ENCODE measurements at regions of chr6 and their contacts with region 1.

Region 1: DNA sequence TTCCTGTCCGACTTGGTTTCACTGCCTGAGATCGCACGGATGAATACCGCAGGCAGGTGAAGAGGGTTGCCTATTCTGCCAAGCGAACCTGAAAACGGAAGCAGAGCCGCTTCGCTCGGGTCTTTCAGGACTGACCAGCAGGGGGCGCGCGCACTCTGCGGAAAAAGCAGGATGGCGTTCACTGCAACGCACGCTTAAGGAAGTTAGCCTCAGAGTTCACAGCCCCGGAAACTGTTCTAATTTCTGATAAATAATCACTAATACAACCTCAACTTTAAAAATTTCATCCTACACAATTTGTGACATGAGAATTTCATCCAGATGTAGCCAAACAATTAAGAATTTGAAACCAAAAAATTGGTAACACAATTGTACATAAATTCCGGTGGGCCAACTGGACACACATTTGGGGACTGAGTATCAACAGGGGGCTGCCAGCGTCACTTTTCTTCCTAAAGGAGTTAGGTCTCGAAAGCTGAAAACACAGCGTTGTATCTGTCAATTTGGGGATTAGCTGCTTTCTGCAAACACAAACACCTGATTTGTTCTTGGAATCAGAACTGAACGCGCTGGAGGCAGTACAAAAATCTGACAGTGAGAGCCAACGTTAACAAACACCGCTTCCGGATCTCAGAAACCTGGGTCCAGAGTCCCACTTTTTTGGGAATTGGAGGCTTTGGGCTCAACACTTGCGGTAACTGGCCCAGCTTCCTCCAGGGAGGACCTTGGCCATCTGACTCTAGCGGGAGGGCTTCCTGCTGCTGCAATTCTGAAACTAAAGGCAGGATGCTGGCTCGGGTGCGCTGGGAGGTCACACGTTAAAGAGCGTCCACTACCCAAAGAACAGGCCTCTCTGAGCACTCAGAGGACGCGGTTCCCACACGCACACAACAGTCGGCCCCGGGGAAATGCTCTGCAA is 8.8 kb downstream of the PXDC1 start:
- DNase-seq: peak; percentile 83 to 93 (median 87)
- ATAC-seq: peak; percentile 60 to 85 (median 77)
- H3K4me3 ChIP-seq: peak overlapping the region in 9 of 12 donors; percentile 11 to 36 (median 25)
- H3K27ac ChIP-seq: peak overlapping the region; percentile 40 to 88 (median 80)
- H3K4me1 ChIP-seq: peaks cover 6 to 98% (median 80%) of the 10 kb centered on the region in 12 donors
- H3K27me3 ChIP-seq: no peaks in the 10 kb centered on the region
- CTCF ChIP-seq: peak; percentile 90 to 98 (median 95)
- POLR2A ChIP-seq: no peak

Region 2: DNA sequence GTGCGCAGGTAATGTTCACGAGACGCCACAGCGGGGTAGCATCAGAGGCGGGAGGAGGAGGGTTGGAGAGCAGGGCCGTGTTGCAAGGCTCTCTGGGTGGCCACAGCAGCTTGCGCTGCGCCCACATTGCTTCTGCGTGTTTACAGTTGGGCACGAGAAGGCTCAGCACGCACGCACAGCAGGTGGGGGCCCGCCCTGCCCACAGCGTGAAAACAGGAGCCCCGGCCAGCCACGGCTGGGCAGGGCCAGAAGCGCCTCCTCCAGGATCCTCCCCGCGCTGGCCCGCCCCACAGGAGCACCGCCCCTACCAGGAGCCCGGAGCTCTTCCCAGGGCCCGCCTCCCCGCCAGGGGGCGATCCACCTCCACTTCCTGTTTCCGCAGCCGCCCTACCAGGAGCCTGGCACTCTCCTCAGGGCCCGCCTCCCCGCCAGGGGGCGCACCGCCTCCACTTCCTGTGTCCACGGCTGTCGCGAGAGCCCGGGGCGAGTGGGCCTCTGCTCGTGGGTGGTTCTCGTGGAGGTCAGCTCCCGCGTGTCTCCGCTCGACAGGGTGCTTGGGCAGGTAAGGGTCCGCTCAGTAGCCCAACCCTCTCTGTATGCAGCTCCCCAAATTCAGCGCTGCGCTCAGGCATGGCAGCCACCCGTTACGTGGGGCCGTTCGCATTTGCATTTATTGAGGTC is 106.4 kb after region 1 on chr6 and contains the start of gene FAM50B:
- intact Hi-C with region 1: loop called in 3 of 10 experiments (anchors 2 to 5 kb)
- DNase-seq: peak; percentile 93 to 96 (median 94)
- ATAC-seq: peak; percentile 95 to 98 (median 98)
- H3K4me3 ChIP-seq: peak within 1 kb of the TSS; percentile 19 to 69 (median 53)
- H3K27ac ChIP-seq: peak within 1 kb of the TSS in 11 of 12 donors; percentile 53 to 83 (median 72)
- H3K4me1 ChIP-seq: peaks cover 0 to 20% (median 2%) of the 10 kb centered on the region in 12 donors
- H3K27me3 ChIP-seq: no peaks in the 10 kb centered on the region
- CTCF ChIP-seq: peak; percentile 91 to 99 (median 94)
- POLR2A ChIP-seq: no peak
- total RNA-seq, gene FAM50B: 13.6 to 29.1 (median 21.5) TPM

Region 3: DNA sequence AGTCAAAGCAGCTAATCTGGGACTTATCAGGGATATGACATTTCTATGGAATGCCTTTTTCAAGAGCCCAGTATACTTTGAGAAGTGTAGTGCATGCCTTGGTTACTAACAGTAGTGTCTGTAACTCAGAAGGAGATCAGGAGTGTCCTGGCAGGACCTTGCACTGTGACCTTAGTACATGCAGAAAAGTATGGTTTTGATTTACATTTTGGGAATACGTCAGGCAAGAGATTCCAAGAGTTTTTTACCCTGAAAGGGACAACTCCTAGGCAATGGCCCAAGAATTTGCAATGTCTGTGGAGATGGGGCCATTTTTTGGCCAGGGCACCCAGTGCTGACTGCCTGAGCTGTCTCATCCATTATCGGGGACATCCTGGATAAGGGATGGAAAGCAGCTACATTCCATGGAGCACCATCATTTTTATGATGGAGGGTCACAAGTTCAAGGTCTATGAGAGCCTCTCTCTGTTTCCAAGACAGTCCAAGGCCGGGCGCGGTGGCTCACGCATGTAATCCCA is 186.7 kb after region 1 on chr6:
- intact Hi-C with region 1: loop called in 8 of 10 experiments (anchors 1 to 5 kb)
- DNase-seq: peak in 1 of 5 donors; percentile 46
- ATAC-seq: peak in 1 of 4 donors; percentile 36
- H3K4me3 ChIP-seq: no peak overlapping the region
- H3K27ac ChIP-seq: peak overlapping the region in 3 of 12 donors; percentile 15 to 64 (median 26)
- H3K4me1 ChIP-seq: peaks cover 0 to 33% (median 9%) of the 10 kb centered on the region in 12 donors
- H3K27me3 ChIP-seq: no peaks in the 10 kb centered on the region
- CTCF ChIP-seq: no peak
- POLR2A ChIP-seq: no peak

Region 4: DNA sequence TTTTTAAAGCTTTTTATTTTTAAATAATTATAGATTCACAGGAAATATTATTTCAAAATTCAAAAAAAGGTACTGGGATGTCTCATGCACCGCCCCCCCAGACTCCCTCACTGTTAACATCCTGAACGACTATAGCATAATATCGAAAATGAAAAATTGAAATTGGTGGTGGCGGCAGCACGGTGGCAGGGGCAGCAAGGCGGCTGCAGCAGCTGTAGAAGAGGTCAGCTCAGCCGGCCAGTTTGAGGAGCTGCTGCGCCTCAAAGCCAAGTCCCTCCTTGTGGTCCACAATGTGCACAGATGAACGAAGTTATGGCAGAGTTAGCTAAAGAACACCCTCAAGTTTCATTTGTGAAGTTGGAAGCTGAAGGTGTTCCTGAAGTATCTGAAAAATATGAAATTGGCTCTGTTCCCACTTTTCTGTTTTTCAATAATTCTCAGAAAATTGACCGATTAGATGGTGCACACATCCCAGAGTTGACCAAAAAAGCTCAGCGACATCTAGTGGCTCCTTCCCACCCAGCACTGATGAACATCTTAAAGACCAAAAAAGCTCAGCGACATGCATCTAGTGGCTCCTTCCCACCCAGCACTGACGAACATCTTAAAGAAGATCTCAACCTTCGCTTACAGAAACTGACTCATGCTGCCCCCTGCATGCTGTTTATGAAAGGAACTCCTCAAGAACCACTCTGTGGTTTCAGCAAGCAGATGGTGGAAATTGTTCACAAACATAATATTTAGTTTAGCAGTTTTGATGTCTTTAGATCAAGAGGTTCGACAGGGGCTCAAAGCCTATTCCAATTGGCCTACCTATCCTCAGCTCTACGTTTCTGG is 235.4 kb after region 1 on chr6:
- intact Hi-C with region 1: loop called in 4 of 10 experiments (anchors 1 to 5 kb)
- DNase-seq: peak in 3 of 5 donors; percentile 15 to 40 (median 32)
- ATAC-seq: peak in 3 of 4 donors; percentile 86 to 92 (median 87)
- H3K4me3 ChIP-seq: peak overlapping the region in 1 of 12 donors; percentile 4
- H3K27ac ChIP-seq: no peak overlapping the region
- H3K4me1 ChIP-seq: peaks cover 0 to 8% (median 0%) of the 10 kb centered on the region in 12 donors
- H3K27me3 ChIP-seq: no peaks in the 10 kb centered on the region
- CTCF ChIP-seq: peak; percentile 41 to 74 (median 60)
- POLR2A ChIP-seq: no peak

Region 5: GRCh38 chr6:4155848-4156466 is 413.3 kb after region 1 on chr6:
- intact Hi-C with region 1: loop called in 2 of 10 experiments (anchors 5 to 10 kb)
- DNase-seq: peak in 4 of 5 donors; percentile 76 to 79 (median 76)
- ATAC-seq: peak; percentile 61 to 93 (median 88)
- H3K4me3 ChIP-seq: peak overlapping the region in 1 of 12 donors; percentile 5
- H3K27ac ChIP-seq: no peak overlapping the region
- H3K4me1 ChIP-seq: peaks cover 0 to 6% (median 0%) of the 10 kb centered on the region in 12 donors
- H3K27me3 ChIP-seq: no peaks in the 10 kb centered on the region
- CTCF ChIP-seq: peak; percentile 81 to 93 (median 84)
- POLR2A ChIP-seq: no peak